Tibial artery (tissue), 4 donors: ENCODE measurements at regions of chr6 and their contacts with region 1.

Region 1: DNA sequence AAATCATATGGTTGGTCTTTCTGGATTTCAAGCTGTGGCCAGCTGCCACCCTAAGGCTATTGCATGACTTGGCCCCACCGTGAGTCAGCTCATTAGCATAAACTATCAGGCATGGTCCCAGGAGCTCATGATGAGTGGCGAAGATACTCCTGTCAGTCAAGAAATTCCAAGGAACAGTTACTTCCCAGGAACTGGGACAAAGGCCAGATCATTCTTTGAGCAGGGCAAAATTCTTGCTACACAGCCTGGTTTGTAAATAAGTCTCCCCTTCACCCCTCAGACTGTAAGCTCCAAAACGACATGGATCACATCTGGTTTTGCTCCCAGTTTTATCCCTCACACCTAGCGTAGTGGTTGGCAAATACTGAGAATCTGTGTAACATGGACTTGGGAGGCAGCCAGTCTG is 33.0 kb upstream of the KIAA1586 start:
- DNase-seq: no peak
- H3K4me3 ChIP-seq: no peak overlapping the region
- H3K27ac ChIP-seq: no peak overlapping the region
- H3K4me1 ChIP-seq: no peaks in the 10 kb centered on the region
- H3K27me3 ChIP-seq: no peaks in the 10 kb centered on the region
- CTCF ChIP-seq: no peak

Region 2: GRCh38 chr6:56693246-56693607 is 320.3 kb before region 1 on chr6:
- intact Hi-C with region 1: no loop called
- DNase-seq: peak; percentile 89 to 91
- H3K4me3 ChIP-seq: peak overlapping the region; percentile 43 to 49
- H3K27ac ChIP-seq: peak overlapping the region; percentile 79 to 80
- H3K4me1 ChIP-seq: peaks cover 0 to 49% (median 9%) of the 10 kb centered on the region in 4 donors
- H3K27me3 ChIP-seq: no peaks in the 10 kb centered on the region
- CTCF ChIP-seq: no peak

Region 3: DNA sequence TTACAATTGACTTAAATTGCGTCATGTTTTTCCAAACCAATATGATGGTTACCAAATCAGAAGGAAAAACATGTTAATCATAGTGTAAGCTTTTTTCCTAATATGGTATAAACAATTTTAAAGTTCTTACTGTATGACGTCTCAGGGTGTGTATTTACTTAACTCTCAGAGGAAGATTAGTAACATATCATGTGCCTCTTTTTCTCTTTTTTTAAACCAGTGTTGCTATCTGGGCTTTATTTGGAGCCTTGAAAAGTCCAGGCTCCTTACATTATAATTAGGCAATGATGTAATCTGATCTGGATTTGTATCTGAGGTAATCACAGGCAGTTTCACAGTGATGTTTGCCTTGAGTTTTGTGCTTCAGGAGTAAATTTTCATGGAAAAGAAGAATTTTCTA is 229.0 kb after region 1 on chr6:
- intact Hi-C with region 1: no loop called
- DNase-seq: no peak
- H3K4me3 ChIP-seq: no peak overlapping the region
- H3K27ac ChIP-seq: peak overlapping the region; percentile 65 to 79
- H3K4me1 ChIP-seq: peaks cover 0 to 26% (median 3%) of the 10 kb centered on the region in 4 donors
- H3K27me3 ChIP-seq: no peaks in the 10 kb centered on the region
- CTCF ChIP-seq: no peak

Region 4: DNA sequence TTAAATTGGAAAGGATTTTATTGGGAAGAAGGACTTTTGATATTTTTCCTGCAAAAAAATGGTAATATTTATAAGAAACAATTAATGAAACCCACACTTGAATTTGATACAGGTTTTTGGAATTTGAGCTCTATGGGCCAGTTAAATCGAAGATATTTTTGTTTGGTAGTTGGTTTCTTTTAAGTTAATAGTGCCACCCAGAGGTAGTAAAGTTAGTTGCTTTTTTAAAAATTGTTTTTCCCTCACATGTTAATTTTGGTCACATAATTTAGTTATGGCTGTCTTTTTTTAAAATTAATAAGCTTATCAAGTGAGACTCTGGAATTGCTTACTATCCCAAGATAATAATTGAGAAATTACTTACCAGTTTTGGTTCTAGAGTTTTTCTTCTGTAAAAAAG is 311.0 kb after region 1 on chr6:
- intact Hi-C with region 1: loop called (anchors 10 kb)
- DNase-seq: no peak
- H3K4me3 ChIP-seq: no peak overlapping the region
- H3K27ac ChIP-seq: no peak overlapping the region
- H3K4me1 ChIP-seq: no peaks in the 10 kb centered on the region
- H3K27me3 ChIP-seq: no peaks in the 10 kb centered on the region
- CTCF ChIP-seq: peak; percentile 41 to 43